ENCODE measurements at regions of chr3 and their contacts with region 1.

Region 1: DNA sequence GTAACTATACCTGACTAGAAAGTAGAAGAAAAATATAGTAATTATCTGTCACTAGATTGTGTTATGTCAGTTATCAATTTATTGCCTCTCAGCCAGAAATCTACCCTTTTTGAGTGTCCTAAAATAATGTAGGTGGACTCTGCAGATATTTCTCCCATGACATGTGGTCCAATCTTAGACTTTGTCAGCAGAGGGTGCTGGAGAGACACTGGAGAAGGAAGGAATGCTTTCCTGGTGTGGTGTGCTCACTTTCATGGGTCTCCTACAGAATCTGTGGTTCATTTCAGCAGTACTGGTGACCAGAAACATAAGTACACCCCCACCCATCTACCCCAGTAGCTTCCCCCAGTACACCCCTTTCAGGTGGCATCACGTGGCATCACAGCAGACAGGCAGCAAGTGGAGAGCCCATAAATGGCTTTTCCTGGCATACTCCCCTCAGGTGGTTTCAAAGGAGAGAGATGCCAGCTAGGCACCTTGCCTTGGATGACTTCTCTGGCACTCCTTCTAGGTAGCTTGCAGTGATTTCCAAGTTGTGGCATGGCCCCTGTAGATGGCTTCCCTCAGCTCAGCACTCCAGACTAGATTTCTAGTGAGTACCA is 114.7 kb downstream of the GADL1 start:
- DNase-seq: peak; percentile 46
- ATAC-seq: peak; percentile 88
- H3K4me3 ChIP-seq: no peak overlapping the region
- H3K27ac ChIP-seq: no peak overlapping the region
- H3K4me1 ChIP-seq: no peaks in the 10 kb centered on the region
- H3K27me3 ChIP-seq: 0 out of 5 replicates have a peak, but pooled peaks cover 0 to 2% of the 10 kb centered on the region in 2 experiments
- CTCF ChIP-seq: peak; percentile 78
- EP300 ChIP-seq: no peak
- POLR2A ChIP-seq: no peak
- RAD21 ChIP-seq: no peak

Region 2: DNA sequence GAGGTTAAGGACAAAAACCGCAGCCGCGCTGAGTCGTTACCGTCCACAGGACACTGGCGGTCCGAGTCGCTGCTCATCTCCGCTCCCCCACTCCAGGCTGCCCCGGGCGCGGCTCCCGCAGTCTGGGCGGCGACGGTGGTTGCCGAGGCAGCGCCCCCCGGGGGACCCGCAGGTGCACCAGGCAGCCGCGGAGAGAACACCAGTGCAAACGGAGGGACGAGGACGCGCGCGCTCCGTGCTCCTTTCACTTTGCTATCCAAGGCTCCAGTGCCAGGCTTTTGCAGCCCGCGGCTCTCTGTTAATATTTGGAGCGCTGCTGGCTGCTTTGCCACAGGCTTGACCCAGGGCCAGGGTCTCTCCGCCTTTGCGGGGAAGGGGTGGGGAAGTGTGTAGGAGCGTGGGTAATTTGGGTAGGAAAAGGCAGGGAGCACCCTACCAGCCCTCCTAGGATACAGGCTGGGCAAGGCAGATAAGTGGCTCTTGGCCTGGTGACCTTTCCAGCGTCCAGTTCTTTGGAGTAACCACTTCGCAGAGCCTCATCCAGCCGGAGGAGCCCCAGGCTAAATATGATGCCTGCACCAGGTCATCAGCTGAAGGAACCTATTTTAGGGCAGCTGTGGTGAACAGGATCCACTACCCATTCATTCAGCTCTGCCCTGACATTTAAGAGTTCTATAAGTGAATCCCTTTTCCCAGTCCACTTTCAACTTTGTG is 114.9 kb after region 1 on chr3 and contains the start of gene GADL1:
- CTCF ChIA-PET with region 1: no interaction called
- POLR2A ChIA-PET with region 1: no interaction called
- in situ Hi-C with region 1: no loop called
- intact Hi-C with region 1: loop called (anchors 10 kb)
- DNase-seq: no peak
- ATAC-seq: peak; percentile 85
- H3K4me3 ChIP-seq: peak within 1 kb of the TSS; percentile 24 to 57 (median 39); a peak in 2 of 6 replicates
- H3K27ac ChIP-seq: no peak within 1 kb of the TSS
- H3K4me1 ChIP-seq: no peaks in the 10 kb centered on the region
- H3K27me3 ChIP-seq: peaks cover 1 to 25% of the 10 kb centered on the region in 2 experiments; a peak in 3 of 5 replicates
- CTCF ChIP-seq: peak; percentile 37
- EP300 ChIP-seq: no peak
- POLR2A ChIP-seq: no peak
- RAD21 ChIP-seq: no peak
- total RNA-seq, gene GADL1: not detected in 2 replicates

Region 3: GRCh38 chr3:31462050-31462569 is 682.3 kb after region 1 on chr3:
- CTCF ChIA-PET with region 1: no interaction called
- POLR2A ChIA-PET with region 1: no interaction called
- in situ Hi-C with region 1: loop called (anchors 25 kb)
- intact Hi-C with region 1: no loop called
- DNase-seq: peak; percentile 37
- ATAC-seq: peak; percentile 93
- H3K4me3 ChIP-seq: no peak overlapping the region; a peak in 1 of 6 replicates
- H3K27ac ChIP-seq: no peak overlapping the region
- H3K4me1 ChIP-seq: peaks cover 17% of the 10 kb centered on the region
- H3K27me3 ChIP-seq: 0 out of 5 replicates have a peak, but pooled peaks cover 0 to 3% of the 10 kb centered on the region in 2 experiments
- CTCF ChIP-seq: no peak
- EP300 ChIP-seq: no peak
- POLR2A ChIP-seq: no peak
- RAD21 ChIP-seq: no peak

Measured in HepG2 (cell line).